ENCODE measurements at regions of chr7 and their contacts with region 1.

Region 1: GRCh38 chr7:124929467-124930172 is at the start of gene POT1:
- DNase-seq: peak; percentile 99 to 100
- H3K4me3 ChIP-seq: peak within 1 kb of the TSS; percentile 63 to 70
- H3K27ac ChIP-seq: peak within 1 kb of the TSS; percentile 84 to 92
- H3K4me1 ChIP-seq: peaks cover 0 to 5% of the 10 kb centered on the region in 2 donors
- H3K27me3 ChIP-seq: no peaks in the 10 kb centered on the region
- CTCF ChIP-seq: no peak
- total RNA-seq, gene POT1: 28.7 TPM

Region 2: GRCh38 chr7:123557398-123558288 is 1372.0 kb before region 1 on chr7 and contains the start of gene NDUFA5:
- intact Hi-C with region 1: loop called (anchors 5 kb)
- DNase-seq: peak; percentile 94 to 99
- H3K4me3 ChIP-seq: peak within 1 kb of the TSS; percentile 81 to 86
- H3K27ac ChIP-seq: peak within 1 kb of the TSS; percentile 77 to 85
- H3K4me1 ChIP-seq: peaks cover 0 to 12% of the 10 kb centered on the region in 2 donors
- H3K27me3 ChIP-seq: no peaks in the 10 kb centered on the region
- CTCF ChIP-seq: no peak
- total RNA-seq, gene NDUFA5: 20.1 TPM

Region 3: GRCh38 chr7:123748734-123749536 is 1180.7 kb before region 1 on chr7 and contains the start of gene WASL:
- intact Hi-C with region 1: loop called (anchors 2 kb)
- DNase-seq: peak; percentile 64 to 96
- H3K4me3 ChIP-seq: peak within 1 kb of the TSS; percentile 84 to 99
- H3K27ac ChIP-seq: peak within 1 kb of the TSS; percentile 99
- H3K4me1 ChIP-seq: peaks cover 0 to 43% of the 10 kb centered on the region in 2 donors
- H3K27me3 ChIP-seq: no peaks in the 10 kb centered on the region
- CTCF ChIP-seq: peak in 1 of 3 experiments; percentile 5
- total RNA-seq, gene WASL: 23.7 TPM

Region 4: GRCh38 chr7:124765401-124766352 is 163.9 kb before region 1 on chr7 and contains the start of gene GPR37:
- intact Hi-C with region 1: loop called (anchors 5 kb)
- DNase-seq: peak in 1 of 2 donors; percentile 75
- H3K4me3 ChIP-seq: peak within 1 kb of the TSS; percentile 59 to 72
- H3K27ac ChIP-seq: peak within 1 kb of the TSS in 1 of 2 donors; percentile 12
- H3K4me1 ChIP-seq: peaks cover 0 to 9% of the 10 kb centered on the region in 2 donors
- H3K27me3 ChIP-seq: no peaks in the 10 kb centered on the region
- CTCF ChIP-seq: peak in 2 of 3 experiments; percentile 8 to 24
- total RNA-seq, gene GPR37: not detected

Region 5: DNA sequence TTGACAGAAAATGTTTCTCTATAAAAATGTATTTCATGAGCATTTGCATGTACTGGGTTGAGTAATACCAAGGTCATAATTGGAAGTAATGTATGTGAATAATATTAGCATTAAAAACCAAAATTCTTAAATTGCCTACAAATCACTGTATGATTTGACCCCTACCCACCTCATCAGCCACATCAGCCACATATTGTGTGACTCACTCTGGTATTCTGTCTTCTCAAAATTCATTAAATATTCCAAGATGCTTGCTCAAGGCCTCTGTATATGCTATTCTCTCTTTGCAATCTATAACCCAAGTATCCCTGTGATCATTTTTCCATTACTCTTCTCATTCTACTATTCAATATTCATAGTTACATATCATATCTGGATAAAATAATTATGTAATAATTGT is 21.4 kb before region 1 on chr7:
- intact Hi-C with region 1: no loop called
- DNase-seq: no peak
- H3K4me3 ChIP-seq: no peak overlapping the region
- H3K27ac ChIP-seq: no peak overlapping the region
- H3K4me1 ChIP-seq: no peaks in the 10 kb centered on the region
- H3K27me3 ChIP-seq: no peaks in the 10 kb centered on the region
- CTCF ChIP-seq: no peak

Region 6: GRCh38 chr7:124992766-124993562 is 63.3 kb after region 1 on chr7:
- intact Hi-C with region 1: loop called (anchors 2 kb)
- DNase-seq: peak in 1 of 2 donors; percentile 67
- H3K4me3 ChIP-seq: peak overlapping the region in 1 of 2 donors; percentile 26
- H3K27ac ChIP-seq: peak overlapping the region; percentile 42 to 55
- H3K4me1 ChIP-seq: peaks cover 0 to 4% of the 10 kb centered on the region in 2 donors
- H3K27me3 ChIP-seq: no peaks in the 10 kb centered on the region
- CTCF ChIP-seq: no peak

Measured in ascending aorta (tissue), 2 donors.